CD4-positive, alpha-beta T cell (primary cell): ENCODE measurements at regions of chr13 and their contacts with region 1.

Region 1: DNA sequence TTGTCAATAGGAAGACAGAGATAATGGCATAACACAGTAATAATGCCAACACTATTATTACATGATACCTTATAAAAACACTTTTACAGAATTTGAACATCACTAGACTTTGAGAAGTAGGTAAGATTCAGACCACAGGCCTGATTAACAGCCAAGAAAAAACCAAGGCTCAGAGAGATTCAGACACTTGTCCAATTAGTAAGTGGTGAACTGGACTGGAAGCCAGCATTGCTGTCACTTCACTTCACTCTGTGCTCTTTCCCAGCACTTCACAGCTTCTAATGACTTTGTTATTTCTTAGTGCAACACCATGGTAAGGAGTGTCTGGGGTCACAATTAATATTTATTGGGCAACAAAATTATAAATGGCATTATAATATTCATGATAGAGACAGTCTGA is 91.9 kb downstream of the TRPC4 start:
- DNase-seq: no peak
- ATAC-seq: no peak
- H3K4me3 ChIP-seq: no peak overlapping the region
- H3K4me3 Mint-ChIP-seq: no peak overlapping the region
- H3K27ac ChIP-seq: no peak overlapping the region
- H3K27ac Mint-ChIP-seq: no peak overlapping the region
- H3K4me1 ChIP-seq: no peaks in the 10 kb centered on the region
- H3K4me1 Mint-ChIP-seq: no peaks in the 10 kb centered on the region
- H3K27me3 ChIP-seq: no peaks in the 10 kb centered on the region
- H3K27me3 Mint-ChIP-seq: no peaks in the 10 kb centered on the region
- CTCF ChIP-seq: no peak

Region 2: DNA sequence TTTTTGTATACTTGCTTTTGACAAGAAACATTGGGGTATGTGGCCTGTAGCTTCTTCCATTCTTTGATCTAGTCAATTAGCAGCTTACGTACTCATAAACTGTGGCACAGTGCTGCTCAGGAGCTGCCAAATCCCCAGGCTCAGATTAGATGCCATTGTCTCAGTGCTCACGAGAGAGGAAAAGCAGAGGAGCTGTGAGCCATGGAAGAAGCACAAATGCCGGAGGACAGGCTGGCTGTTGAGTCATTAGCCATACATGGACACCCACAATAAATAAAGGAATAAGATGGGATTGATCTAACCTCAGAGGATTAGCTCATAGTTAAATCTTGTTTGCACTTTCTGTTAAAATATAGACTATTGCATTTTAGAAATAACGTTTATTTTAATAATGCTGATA is 300.8 kb before region 1 on chr13:
- CTCF ChIA-PET with region 1: no interaction called
- POLR2A ChIA-PET with region 1: no interaction called
- intact Hi-C with region 1: no loop called
- DNase-seq: no peak
- ATAC-seq: no peak
- H3K4me3 ChIP-seq: no peak overlapping the region
- H3K4me3 Mint-ChIP-seq: no peak overlapping the region
- H3K27ac ChIP-seq: no peak overlapping the region
- H3K27ac Mint-ChIP-seq: no peak overlapping the region
- H3K4me1 ChIP-seq: no peaks in the 10 kb centered on the region
- H3K4me1 Mint-ChIP-seq: no peaks in the 10 kb centered on the region
- H3K27me3 ChIP-seq: no peaks in the 10 kb centered on the region
- H3K27me3 Mint-ChIP-seq: no peaks in the 10 kb centered on the region
- CTCF ChIP-seq: no peak

Region 3: GRCh38 chr13:37797631-37798030 is 20.0 kb after region 1 on chr13:
- CTCF ChIA-PET with region 1: no interaction called
- POLR2A ChIA-PET with region 1: no interaction called
- intact Hi-C with region 1: loop called in 1 of 2 experiments (anchors 1 kb)
- DNase-seq: no peak
- ATAC-seq: no peak
- H3K4me3 ChIP-seq: no peak overlapping the region
- H3K4me3 Mint-ChIP-seq: no peak overlapping the region
- H3K27ac ChIP-seq: no peak overlapping the region
- H3K27ac Mint-ChIP-seq: no peak overlapping the region
- H3K4me1 ChIP-seq: no peaks in the 10 kb centered on the region
- H3K4me1 Mint-ChIP-seq: no peaks in the 10 kb centered on the region
- H3K27me3 ChIP-seq: no peaks in the 10 kb centered on the region
- H3K27me3 Mint-ChIP-seq: no peaks in the 10 kb centered on the region
- CTCF ChIP-seq: no peak

Region 4: DNA sequence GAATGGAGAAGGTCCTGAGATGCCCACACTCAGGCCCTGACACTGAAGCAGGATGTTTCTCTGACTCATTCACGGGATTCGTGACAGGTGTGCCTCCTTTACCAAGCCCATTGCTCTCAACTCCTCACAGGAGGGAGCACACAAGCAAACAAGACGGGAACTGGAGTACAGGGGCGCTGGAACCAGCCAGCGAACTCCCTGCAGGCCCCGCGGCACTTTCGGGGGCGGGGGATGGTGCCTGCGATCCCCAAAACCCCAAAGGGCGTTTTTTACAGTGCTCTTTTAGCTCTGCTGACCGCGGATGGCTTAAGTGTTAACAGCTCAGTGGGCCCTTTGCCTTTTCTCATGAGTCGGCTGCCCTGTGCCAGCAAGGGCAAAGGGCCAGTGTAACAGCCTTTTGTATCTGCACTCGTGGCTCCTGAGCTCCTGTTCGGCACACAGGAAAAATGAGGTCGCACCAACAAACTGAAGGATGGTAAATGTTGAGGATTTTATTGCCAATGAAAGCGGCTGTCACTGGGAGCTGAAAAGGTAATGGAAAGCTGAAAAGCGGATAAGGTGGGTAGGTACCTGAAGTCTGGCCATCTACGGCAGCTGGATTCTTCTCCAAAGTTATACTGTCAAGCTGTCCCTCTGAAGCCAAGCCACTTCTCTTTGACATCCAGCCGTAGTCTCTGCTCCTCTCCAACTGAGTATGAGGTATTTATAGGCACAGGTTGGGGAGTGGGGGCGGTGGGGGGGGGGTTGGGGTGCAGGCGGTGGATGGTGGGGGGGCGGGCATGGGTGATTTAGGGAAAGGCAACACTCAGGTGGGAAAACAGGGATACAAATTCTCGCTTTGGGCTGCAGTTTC is 156.9 kb after region 1 on chr13:
- CTCF ChIA-PET with region 1: no interaction called
- POLR2A ChIA-PET with region 1: no interaction called
- intact Hi-C with region 1: no loop called
- DNase-seq: no peak
- ATAC-seq: no peak
- H3K4me3 ChIP-seq: no peak overlapping the region
- H3K4me3 Mint-ChIP-seq: no peak overlapping the region
- H3K27ac ChIP-seq: no peak overlapping the region
- H3K27ac Mint-ChIP-seq: no peak overlapping the region
- H3K4me1 ChIP-seq: no peaks in the 10 kb centered on the region
- H3K4me1 Mint-ChIP-seq: no peaks in the 10 kb centered on the region
- H3K27me3 ChIP-seq: no peaks in the 10 kb centered on the region
- H3K27me3 Mint-ChIP-seq: no peaks in the 10 kb centered on the region
- CTCF ChIP-seq: no peak